Pancreas (tissue), 10 donors: ENCODE measurements at regions of chr4 and their contacts with region 1.

Region 1: GRCh38 chr4:121096629-121097028 is 24.3 kb upstream of the NDNF start:
- DNase-seq: no peak
- ATAC-seq: peak in 3 of 4 donors; percentile 40 to 53 (median 47)
- H3K4me3 ChIP-seq: no peak overlapping the region
- H3K27ac ChIP-seq: no peak overlapping the region
- H3K4me1 ChIP-seq: no peaks in the 10 kb centered on the region
- H3K27me3 ChIP-seq: no peaks in the 10 kb centered on the region
- CTCF ChIP-seq: peak in 3 of 4 donors; percentile 38 to 46 (median 43)

Region 2: DNA sequence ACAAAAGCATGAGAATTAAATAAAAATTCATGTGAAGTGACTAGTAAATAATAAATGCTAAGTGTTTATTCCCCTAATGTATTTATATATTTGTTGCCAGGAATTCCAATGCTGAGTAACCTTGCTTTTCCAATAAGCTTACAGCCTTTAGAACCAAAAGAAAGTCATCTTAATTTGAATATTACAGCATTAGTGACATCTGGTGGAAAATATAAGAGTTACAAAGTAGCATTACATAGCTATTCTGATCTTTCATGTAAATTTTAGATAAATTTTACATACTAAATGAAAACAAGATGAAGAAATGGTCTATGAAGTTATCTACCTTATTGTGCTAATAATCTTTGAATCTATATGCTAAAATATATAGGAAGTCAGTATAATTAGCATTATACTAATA is 1040.4 kb before region 1 on chr4:
- intact Hi-C with region 1: no loop called
- DNase-seq: no peak
- ATAC-seq: peak in 3 of 4 donors; percentile 50 to 72 (median 71)
- H3K4me3 ChIP-seq: no peak overlapping the region
- H3K27ac ChIP-seq: no peak overlapping the region
- H3K4me1 ChIP-seq: no peaks in the 10 kb centered on the region
- H3K27me3 ChIP-seq: no peaks in the 10 kb centered on the region
- CTCF ChIP-seq: peak in 2 of 4 donors; percentile 9 to 14

Region 3: GRCh38 chr4:120156120-120156718 is 940.4 kb before region 1 on chr4:
- intact Hi-C with region 1: loop called in 2 of 3 experiments (anchors 10 kb)
- DNase-seq: peak in 2 of 6 donors; percentile 8 to 29
- ATAC-seq: peak in 3 of 4 donors; percentile 67 to 77 (median 74)
- H3K4me3 ChIP-seq: no peak overlapping the region
- H3K27ac ChIP-seq: no peak overlapping the region
- H3K4me1 ChIP-seq: no peaks in the 10 kb centered on the region
- H3K27me3 ChIP-seq: peaks cover 0 to 12% (median 0%) of the 10 kb centered on the region in 4 donors
- CTCF ChIP-seq: peak in 3 of 4 donors; percentile 37 to 56 (median 53)

Region 4: GRCh38 chr4:120718979-120719566 is 377.6 kb before region 1 on chr4:
- intact Hi-C with region 1: loop called in 1 of 3 experiments (anchors 10 kb)
- DNase-seq: peak in 1 of 6 donors; percentile 12
- ATAC-seq: peak in 3 of 4 donors; percentile 56 to 84 (median 79)
- H3K4me3 ChIP-seq: no peak overlapping the region
- H3K27ac ChIP-seq: no peak overlapping the region
- H3K4me1 ChIP-seq: no peaks in the 10 kb centered on the region
- H3K27me3 ChIP-seq: no peaks in the 10 kb centered on the region
- CTCF ChIP-seq: peak in 2 of 4 donors; percentile 13 to 42